ENCODE measurements at regions of chr17 and their contacts with region 1.

Region 1: DNA sequence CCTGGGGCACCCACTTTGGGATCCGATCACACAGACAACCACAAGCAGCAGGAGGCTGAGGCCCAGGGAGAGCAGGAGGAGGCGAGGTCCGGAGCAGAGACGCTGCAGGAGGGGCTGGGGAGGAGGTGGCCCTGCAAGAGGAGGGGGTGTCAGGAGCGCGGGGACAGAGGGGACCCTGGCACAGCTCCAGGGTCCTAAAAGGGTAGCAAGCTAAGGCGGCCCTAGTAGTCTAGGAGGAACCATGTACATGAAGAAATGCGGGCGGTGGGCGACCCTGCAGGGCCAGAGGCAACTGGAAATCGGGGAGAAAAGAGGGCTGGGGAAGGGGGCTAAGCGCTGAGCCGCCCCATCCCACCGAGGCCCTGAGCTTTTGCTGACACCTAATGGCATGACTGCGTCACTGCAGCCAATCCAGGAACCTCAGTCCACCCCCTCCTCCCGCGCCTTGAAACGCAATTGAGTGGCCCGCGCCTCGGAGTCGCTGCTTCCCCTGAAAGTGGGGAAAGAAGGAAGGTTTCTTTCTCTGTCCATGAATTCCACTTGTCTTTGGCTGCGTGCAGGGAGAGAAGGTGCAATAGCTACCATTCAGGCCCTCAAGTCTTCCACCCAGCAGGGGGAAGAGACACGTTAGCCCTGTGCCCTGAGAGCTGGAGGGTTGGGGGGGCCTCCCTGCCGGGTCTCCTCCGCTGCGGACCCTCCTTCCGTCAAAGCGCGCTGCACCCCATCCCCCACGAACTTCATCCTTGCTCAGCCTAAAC is 1.8 kb downstream of the ASGR1 start:
- DNase-seq: peak; percentile 72 to 95
- ATAC-seq: peak; percentile 84 to 92
- H3K4me3 ChIP-seq: peak overlapping the region; percentile 54
- H3K27ac ChIP-seq: peak overlapping the region; percentile 67 to 88
- H3K4me1 ChIP-seq: peaks cover 23% of the 10 kb centered on the region
- CTCF ChIP-seq: peak; percentile 88
- EP300 ChIP-seq: no peak
- POLR2A ChIP-seq: no peak
- RAD21 ChIP-seq: peak; percentile 90 to 94

Region 2: DNA sequence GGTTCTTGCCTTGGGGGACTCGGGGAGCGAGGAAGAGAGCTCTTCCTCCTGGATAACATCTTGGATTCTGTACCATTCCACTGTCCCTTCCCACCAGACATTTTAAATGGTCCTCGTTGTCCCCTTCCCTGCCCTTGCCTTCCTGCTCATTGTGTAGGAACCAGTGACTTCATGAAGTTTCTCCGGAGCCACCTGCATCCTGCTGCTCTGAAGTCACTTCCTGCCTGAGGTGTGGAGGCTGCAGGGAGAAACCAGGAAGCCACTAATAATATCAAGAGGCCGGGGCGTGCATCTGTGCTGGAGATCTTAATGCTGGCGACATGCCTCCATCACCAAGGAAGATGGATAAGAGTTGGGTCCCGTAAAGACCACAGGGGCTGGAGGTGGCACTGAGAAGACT is 147.7 kb before region 1 on chr17:
- CTCF ChIA-PET with region 1: no interaction called
- POLR2A ChIA-PET with region 1: no interaction called
- DNase-seq: no peak
- ATAC-seq: no peak
- H3K4me3 ChIP-seq: no peak overlapping the region
- H3K27ac ChIP-seq: no peak overlapping the region
- H3K4me1 ChIP-seq: no peaks in the 10 kb centered on the region; the same call in 2 of the 3 replicates
- CTCF ChIP-seq: no peak
- EP300 ChIP-seq: no peak
- POLR2A ChIP-seq: no peak
- RAD21 ChIP-seq: no peak

Region 3: GRCh38 chr17:7130621-7131422 is 46.6 kb before region 1 on chr17:
- CTCF ChIA-PET with region 1: interaction called, 78 read pairs
- POLR2A ChIA-PET with region 1: no interaction called
- DNase-seq: no peak
- ATAC-seq: no peak; a peak in 1 of 6 replicates
- H3K4me3 ChIP-seq: no peak overlapping the region
- H3K27ac ChIP-seq: peak overlapping the region in 1 of 2 experiments; percentile 2; a peak in 1 of 6 replicates
- H3K4me1 ChIP-seq: peaks cover 4% of the 10 kb centered on the region; the same call in 2 of the 3 replicates
- CTCF ChIP-seq: no peak
- EP300 ChIP-seq: no peak
- POLR2A ChIP-seq: no peak
- RAD21 ChIP-seq: no peak

Region 4: DNA sequence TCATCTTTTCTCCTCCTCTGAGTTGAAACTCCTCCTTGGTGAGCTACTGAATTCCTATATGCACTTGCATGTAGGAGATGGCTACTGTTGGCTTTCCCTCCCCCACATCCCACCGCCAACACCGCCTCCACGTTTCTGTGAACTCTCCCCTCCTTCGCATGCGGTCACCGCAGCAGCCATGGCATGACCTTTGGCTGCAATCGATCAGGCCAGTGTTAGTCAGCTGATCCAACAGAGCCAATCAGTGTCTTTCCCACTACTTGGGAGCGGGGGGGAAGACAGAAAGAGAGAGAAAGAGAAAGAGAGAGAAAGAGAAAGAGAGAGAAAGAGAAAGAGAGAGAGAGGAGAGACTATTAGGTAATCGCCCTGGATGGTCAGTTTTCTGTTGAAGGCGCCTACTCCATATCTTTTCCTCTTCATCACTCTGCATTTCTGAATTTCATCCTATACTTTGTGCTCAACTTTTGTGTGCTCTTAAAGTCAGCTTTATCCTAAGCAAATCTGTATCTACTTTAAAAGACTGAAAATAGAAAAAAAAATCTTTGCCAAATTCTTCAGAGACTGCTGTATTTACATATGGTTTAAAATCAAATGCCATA is 20.9 kb before region 1 on chr17:
- CTCF ChIA-PET with region 1: interaction called, 31 read pairs
- POLR2A ChIA-PET with region 1: no interaction called
- DNase-seq: no peak
- ATAC-seq: no peak
- H3K4me3 ChIP-seq: no peak overlapping the region
- H3K27ac ChIP-seq: no peak overlapping the region
- H3K4me1 ChIP-seq: no peaks in the 10 kb centered on the region
- CTCF ChIP-seq: no peak
- EP300 ChIP-seq: no peak
- POLR2A ChIP-seq: no peak
- RAD21 ChIP-seq: no peak

Region 5: DNA sequence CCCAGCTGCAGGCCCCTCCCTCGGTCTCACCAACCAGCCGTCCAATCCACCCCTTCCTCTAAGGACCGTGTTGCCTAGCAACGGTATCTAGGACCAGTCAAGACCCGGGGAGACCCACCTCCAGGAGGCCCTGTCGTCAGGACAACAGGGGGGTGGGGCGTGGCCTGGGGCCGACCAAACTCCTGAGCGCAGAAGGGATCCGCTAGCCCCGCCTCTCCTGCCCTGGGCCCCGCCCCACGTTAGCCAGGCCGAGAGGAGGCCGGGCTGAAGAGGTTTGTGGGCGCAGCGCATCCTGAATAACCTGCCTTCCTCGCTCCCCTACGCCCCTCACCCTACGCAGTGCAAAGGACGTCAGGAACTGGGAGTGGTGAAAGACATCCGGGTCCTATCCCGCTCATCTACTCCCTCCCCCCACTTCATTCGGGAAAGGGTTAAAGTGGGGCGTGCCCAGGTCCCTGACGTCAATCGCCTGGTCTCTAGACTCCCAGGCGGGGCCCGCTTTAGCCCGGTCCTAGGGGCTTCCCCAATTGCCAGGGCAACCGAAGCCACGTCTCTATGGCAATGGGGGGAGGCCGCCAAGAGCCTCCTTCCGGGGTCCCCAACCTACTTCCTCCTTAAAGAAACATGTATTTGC is 27.6 kb after region 1 on chr17:
- CTCF ChIA-PET with region 1: interaction called, 20 read pairs
- POLR2A ChIA-PET with region 1: no interaction called
- DNase-seq: peak; percentile 94 to 98
- ATAC-seq: peak; percentile 87 to 91
- H3K4me3 ChIP-seq: peak overlapping the region; percentile 52
- H3K27ac ChIP-seq: peak overlapping the region; percentile 82 to 85
- H3K4me1 ChIP-seq: peaks cover 12% of the 10 kb centered on the region
- CTCF ChIP-seq: no peak
- EP300 ChIP-seq: no peak
- POLR2A ChIP-seq: peak; percentile 59
- RAD21 ChIP-seq: no peak